ENCODE measurements at regions of chr6 and their contacts with region 1.

Region 1: GRCh38 chr6:22145823-22146677 is 150.8 kb downstream of the PRL start:
- DNase-seq: no peak
- H3K4me3 ChIP-seq: peak overlapping the region in 3 of 4 donors; percentile 33 to 47 (median 43)
- H3K27ac ChIP-seq: peak overlapping the region in 1 of 4 donors; percentile 57
- H3K4me1 ChIP-seq: peaks cover 0 to 62% (median 49%) of the 10 kb centered on the region in 4 donors
- H3K27me3 ChIP-seq: no peaks in the 10 kb centered on the region
- CTCF ChIP-seq: peak in 3 of 4 experiments; percentile 24 to 32 (median 31)
- EP300 ChIP-seq: peak in 1 of 4 donors; percentile 30
- POLR2A ChIP-seq: no peak

Region 2: GRCh38 chr6:21999012-21999528 is 147.0 kb before region 1 on chr6:
- intact Hi-C with region 1: loop called (anchors 10 kb)
- DNase-seq: no peak
- H3K4me3 ChIP-seq: no peak overlapping the region
- H3K27ac ChIP-seq: peak overlapping the region in 2 of 4 donors; percentile 17 to 20
- H3K4me1 ChIP-seq: peaks cover 0 to 68% (median 44%) of the 10 kb centered on the region in 4 donors
- H3K27me3 ChIP-seq: no peaks in the 10 kb centered on the region
- CTCF ChIP-seq: no peak
- EP300 ChIP-seq: no peak
- POLR2A ChIP-seq: no peak

Measured in sigmoid colon (tissue), 7 donors.